Activated B cell treated with CpG ODN at 0.5 μM for 24 hours (primary cell): ENCODE measurements at regions of chr1 and their contacts with region 1.

Region 1: DNA sequence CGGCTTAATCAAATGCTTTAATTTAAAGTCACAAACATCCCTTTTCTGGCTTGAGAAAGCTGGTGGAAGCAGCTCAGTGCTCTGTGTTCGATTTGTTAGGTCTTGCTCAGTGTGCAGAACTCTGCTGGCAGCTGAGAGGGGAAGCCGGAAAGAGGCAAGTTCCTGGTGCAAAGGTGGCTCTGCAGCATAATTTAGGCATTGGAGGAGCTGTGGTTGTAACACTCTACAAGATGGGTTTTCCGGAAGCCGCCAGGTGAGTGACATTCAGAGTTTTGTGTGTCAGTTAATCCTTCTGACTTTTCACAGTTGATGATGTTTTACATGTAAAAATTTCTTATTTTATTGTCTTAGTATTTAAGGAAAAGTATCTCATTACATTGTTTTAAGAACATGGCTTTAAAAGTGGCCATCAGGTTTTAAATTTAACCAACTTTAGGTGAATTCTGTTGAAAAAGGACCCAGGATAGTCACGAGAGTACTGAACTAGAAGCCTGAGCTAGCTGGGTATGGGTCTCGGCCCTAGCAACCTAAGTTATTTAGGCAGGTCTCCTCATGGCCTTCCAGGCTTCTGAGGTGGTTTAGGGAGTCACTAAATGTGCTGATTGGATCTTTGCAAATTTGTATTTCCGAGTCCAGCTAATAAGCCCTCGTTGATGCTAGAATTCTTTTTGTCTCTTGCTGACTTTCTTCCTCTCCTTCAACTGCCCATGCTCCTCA is 47.1 kb upstream of the PODN start:
- DNase-seq: peak; percentile 37
- ATAC-seq: peak; percentile 94
- H3K4me3 Mint-ChIP-seq: peak overlapping the region; percentile 92
- H3K27ac Mint-ChIP-seq: peak overlapping the region; percentile 72
- H3K4me1 Mint-ChIP-seq: peaks cover 36% of the 10 kb centered on the region
- H3K27me3 Mint-ChIP-seq: no peaks in the 10 kb centered on the region
- CTCF ChIP-seq: no peak

Region 2: DNA sequence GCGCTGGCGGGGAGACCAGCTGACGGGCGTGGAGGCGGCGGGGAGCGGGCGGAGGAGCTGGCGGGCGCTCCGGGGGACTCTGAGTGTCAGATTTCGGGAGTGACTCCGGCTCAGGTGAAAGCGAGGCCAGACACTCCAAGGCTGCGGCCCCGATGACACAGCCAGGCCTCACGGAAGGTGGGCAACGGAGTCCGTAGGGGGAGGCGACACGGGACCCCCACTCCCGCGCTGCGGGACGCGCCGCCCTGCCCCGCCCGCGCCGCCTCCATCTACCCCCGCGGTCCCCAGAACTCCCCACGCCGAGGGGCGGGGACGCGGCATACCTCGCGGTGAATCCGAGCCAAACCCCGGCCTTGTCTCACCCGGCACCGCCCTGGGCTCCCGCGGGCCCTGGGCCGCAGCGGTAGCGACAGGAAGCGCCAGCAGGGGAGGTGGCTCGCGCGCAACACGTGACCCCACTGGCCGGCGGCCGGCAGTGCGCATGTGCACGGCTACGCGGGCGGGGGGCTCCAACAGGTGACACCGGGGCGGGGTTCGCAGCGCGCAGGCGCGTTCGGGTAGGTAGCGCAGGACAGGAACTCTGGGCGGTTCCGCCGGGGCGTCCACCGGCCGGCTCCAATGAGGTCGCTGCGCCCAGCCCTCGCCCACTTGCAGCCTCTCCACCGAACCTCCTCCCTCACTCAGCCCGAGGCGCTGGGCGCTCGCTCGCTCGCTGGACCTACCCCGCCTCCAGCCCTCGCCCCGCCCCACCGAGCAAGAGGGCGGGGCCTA is 649.0 kb before region 1 on chr1 and contains the start of gene CC2D1B:
- CTCF ChIA-PET with region 1: no interaction called
- POLR2A ChIA-PET with region 1: no interaction called
- intact Hi-C with region 1: loop called (anchors 5 kb)
- DNase-seq: peak; percentile 100
- ATAC-seq: peak; percentile 95
- H3K4me3 Mint-ChIP-seq: peak within 1 kb of the TSS; percentile 94
- H3K27ac Mint-ChIP-seq: peak within 1 kb of the TSS; percentile 88
- H3K4me1 Mint-ChIP-seq: peaks cover 30% of the 10 kb centered on the region
- H3K27me3 Mint-ChIP-seq: peaks cover 2% of the 10 kb centered on the region
- CTCF ChIP-seq: no peak
- total RNA-seq, gene CC2D1B: 51.3 and 66.4 TPM in 2 replicates

Region 3: DNA sequence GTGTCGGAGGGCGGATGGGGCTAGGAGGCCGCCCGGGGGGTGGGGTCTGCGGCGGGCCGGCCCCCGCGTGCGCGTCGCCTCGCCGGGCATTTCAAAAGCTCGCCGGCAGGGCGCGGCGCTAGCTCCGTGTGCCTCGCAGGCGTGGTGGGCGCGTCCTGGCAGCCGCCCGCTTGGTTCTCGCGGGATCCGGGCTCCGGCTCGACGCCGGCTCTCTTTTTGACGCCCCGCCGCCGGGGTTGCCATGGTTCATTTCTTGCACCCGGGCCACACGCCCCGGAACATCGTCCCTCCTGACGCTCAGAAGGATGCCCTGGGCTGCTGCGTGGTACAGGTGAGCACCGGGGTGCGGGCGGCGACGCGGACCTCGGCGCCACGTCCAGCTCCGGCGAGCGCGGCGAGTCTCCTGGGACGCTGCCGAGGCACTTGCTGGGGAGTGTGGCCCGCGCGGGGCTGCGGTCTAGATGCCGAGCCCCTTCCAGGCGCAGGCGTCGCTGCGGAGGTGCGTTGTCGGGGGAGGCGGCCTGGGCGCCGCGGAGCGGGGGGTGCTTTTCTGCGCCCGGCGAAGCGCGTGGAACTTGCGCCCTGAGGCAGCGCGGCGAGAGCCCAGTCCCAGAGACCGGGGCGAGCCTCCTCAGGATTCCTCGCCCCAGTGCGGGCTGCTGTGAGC is 172.2 kb before region 1 on chr1 and contains the start of gene ZYG11A:
- CTCF ChIA-PET with region 1: no interaction called
- POLR2A ChIA-PET with region 1: interaction called, 10 read pairs
- intact Hi-C with region 1: no loop called
- DNase-seq: peak; percentile 74
- ATAC-seq: peak; percentile 97
- H3K4me3 Mint-ChIP-seq: peak within 1 kb of the TSS; percentile 80
- H3K27ac Mint-ChIP-seq: peak within 1 kb of the TSS; percentile 59
- H3K4me1 Mint-ChIP-seq: peaks cover 6% of the 10 kb centered on the region
- H3K27me3 Mint-ChIP-seq: peaks cover 6% of the 10 kb centered on the region
- CTCF ChIP-seq: no peak
- total RNA-seq, gene ZYG11A: 1.3 and 1.5 TPM in 2 replicates

Region 4: DNA sequence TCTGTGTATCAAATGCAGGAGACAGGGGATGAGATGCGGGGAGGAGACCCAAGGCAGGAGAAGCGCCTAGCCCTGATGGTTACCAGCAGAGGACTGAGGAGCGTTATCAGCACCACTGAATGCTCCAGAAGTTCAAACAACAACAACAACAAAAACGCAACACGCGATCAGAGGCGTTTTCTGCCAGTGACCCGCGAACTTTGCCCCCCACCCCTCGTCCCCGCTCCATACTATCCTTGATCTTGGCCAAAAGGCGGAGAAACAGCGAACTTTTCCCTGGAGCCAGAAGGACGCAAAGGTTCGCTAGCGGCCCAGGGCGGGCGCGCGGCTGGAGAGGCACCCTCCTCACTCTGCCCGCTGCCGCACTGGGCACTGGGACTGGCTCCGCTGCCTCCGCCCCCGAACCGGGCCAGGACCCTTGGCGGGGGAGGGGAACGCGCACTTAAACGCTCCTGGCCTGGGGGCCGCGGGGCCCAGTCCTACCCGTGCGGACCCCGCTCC is 94.1 kb before region 1 on chr1:
- CTCF ChIA-PET with region 1: no interaction called
- POLR2A ChIA-PET with region 1: no interaction called
- intact Hi-C with region 1: loop called (anchors 2 kb)
- DNase-seq: no peak
- ATAC-seq: no peak
- H3K4me3 Mint-ChIP-seq: peak overlapping the region; percentile 85
- H3K27ac Mint-ChIP-seq: no peak overlapping the region
- H3K4me1 Mint-ChIP-seq: peaks cover 18% of the 10 kb centered on the region
- H3K27me3 Mint-ChIP-seq: peaks cover 2% of the 10 kb centered on the region
- CTCF ChIP-seq: no peak

Region 5: GRCh38 chr1:53238197-53239155 is 223.5 kb after region 1 on chr1 and contains the start of gene MAGOH:
- CTCF ChIA-PET with region 1: no interaction called
- POLR2A ChIA-PET with region 1: no interaction called
- intact Hi-C with region 1: loop called (anchors 1 kb)
- DNase-seq: peak; percentile 93
- ATAC-seq: peak; percentile 100
- H3K4me3 Mint-ChIP-seq: peak within 1 kb of the TSS; percentile 97
- H3K27ac Mint-ChIP-seq: peak within 1 kb of the TSS; percentile 91
- H3K4me1 Mint-ChIP-seq: peaks cover 32% of the 10 kb centered on the region
- H3K27me3 Mint-ChIP-seq: no peaks in the 10 kb centered on the region
- CTCF ChIP-seq: no peak
- total RNA-seq, gene MAGOH: 56.6 and 65.0 TPM in 2 replicates

Region 6: GRCh38 chr1:53450225-53450624 is 435.3 kb after region 1 on chr1:
- CTCF ChIA-PET with region 1: no interaction called
- POLR2A ChIA-PET with region 1: no interaction called
- intact Hi-C with region 1: no loop called
- DNase-seq: no peak
- ATAC-seq: no peak
- H3K4me3 Mint-ChIP-seq: no peak overlapping the region
- H3K27ac Mint-ChIP-seq: no peak overlapping the region
- H3K4me1 Mint-ChIP-seq: no peaks in the 10 kb centered on the region
- H3K27me3 Mint-ChIP-seq: peaks cover 18% of the 10 kb centered on the region
- CTCF ChIP-seq: no peak